Caco-2 (cell line): ENCODE measurements at regions of chr1 and their contacts with region 1.

Region 1: DNA sequence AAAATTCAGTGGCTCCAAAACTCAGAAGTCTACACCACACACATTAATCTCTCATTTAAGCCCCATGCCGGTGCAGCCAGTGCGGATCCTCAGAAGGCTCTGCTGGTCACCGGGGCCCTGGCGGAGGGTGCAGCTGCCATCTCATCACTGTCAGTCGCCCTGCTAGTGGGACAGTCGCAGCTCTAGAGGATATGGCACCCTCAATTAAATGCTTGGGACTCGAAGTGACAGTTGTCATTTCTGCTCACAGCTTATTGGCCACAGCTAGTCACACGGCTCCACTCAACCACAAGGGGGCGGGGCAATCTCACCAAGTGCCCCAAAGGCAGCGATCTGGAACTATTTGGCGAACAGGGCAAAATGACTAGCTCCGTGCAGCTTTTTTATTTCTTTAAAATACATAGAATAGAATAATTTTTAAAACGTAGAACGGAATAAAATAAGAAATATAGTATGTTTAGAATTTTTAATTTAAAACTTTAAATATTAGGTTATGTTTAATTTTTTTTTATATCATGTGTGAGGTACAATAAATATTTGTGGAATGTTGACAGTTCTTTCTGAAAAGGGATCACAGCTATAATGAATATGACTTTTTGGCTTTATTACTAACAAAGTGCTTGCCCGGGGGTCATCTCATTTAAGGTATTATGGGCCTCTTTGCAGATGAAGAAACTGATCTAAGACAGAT is 8.0 kb upstream of the MAN1C1 start:
- DNase-seq: peak; percentile 80 to 84
- H3K4me3 ChIP-seq: no peak overlapping the region; the same call in 1 of the 2 replicates
- H3K4me3 Mint-ChIP-seq: peak overlapping the region; percentile 19
- H3K27ac Mint-ChIP-seq: no peak overlapping the region
- H3K4me1 ChIP-seq: peaks cover 8% of the 10 kb centered on the region; the same call in 1 of the 2 replicates
- H3K4me1 Mint-ChIP-seq: peaks cover 7% of the 10 kb centered on the region
- H3K27me3 ChIP-seq: no peaks in the 10 kb centered on the region
- H3K27me3 Mint-ChIP-seq: peaks cover 3% of the 10 kb centered on the region
- CTCF ChIP-seq: peak; percentile 50 to 58

Region 2: GRCh38 chr1:25247829-25248754 is 360.5 kb before region 1 on chr1:
- CTCF ChIA-PET with region 1: no interaction called
- POLR2A ChIA-PET with region 1: no interaction called
- intact Hi-C with region 1: no loop called
- DNase-seq: no peak
- H3K4me3 ChIP-seq: peak overlapping the region; percentile 86
- H3K4me3 Mint-ChIP-seq: peak overlapping the region; percentile 95
- H3K27ac Mint-ChIP-seq: peak overlapping the region; percentile 92
- H3K4me1 ChIP-seq: peaks cover 12% of the 10 kb centered on the region
- H3K4me1 Mint-ChIP-seq: peaks cover 7% of the 10 kb centered on the region
- H3K27me3 ChIP-seq: no peaks in the 10 kb centered on the region
- H3K27me3 Mint-ChIP-seq: no peaks in the 10 kb centered on the region
- CTCF ChIP-seq: peak in 1 of 2 experiments; percentile 30

Region 3: DNA sequence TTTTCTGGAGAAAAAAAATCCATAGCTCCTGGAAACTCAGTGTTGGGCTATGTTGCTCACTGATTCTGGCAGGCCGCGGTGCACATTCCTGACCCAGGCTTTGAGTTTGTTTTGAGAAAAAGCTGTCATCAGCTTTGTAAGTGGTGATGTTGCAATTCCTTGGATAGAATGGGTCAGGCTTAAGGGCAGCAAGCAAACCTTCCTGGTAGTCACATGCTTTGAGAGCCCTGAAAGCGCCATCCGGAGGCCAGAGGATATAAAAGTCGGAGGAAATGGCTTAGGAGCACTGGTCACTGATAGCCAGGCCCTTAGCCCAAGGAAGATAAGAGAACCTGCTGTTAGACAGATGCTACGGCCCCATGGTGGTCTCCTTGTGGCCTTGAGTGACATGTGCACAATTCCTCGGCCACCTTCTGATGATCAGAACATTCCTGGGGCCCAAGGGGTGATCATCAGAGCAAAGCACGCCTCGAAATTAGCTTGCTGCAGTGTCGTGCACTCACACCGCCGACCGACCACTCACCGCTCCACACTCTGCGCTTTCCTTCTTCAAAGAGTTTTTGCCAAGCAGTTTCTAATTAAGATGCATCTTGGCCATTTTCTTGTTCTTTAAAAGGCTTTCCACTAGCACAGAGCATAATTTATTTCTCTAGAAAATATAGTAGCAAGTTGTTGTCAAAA is 86.6 kb after region 1 on chr1:
- CTCF ChIA-PET with region 1: interaction called, 9 read pairs
- POLR2A ChIA-PET with region 1: interaction called, 4 read pairs
- intact Hi-C with region 1: loop called (anchors 1 kb)
- DNase-seq: peak; percentile 78 to 84
- H3K4me3 ChIP-seq: no peak overlapping the region
- H3K4me3 Mint-ChIP-seq: no peak overlapping the region
- H3K27ac Mint-ChIP-seq: peak overlapping the region; percentile 74
- H3K4me1 ChIP-seq: no peaks in the 10 kb centered on the region
- H3K4me1 Mint-ChIP-seq: peaks cover 7% of the 10 kb centered on the region
- H3K27me3 ChIP-seq: no peaks in the 10 kb centered on the region
- H3K27me3 Mint-ChIP-seq: no peaks in the 10 kb centered on the region
- CTCF ChIP-seq: peak in 1 of 2 experiments; percentile 55

Region 4: GRCh38 chr1:25810341-25811299 is 202.0 kb after region 1 on chr1:
- CTCF ChIA-PET with region 1: interaction called, 12 read pairs
- POLR2A ChIA-PET with region 1: no interaction called
- intact Hi-C with region 1: no loop called
- DNase-seq: peak; percentile 66 to 79
- H3K4me3 ChIP-seq: no peak overlapping the region
- H3K4me3 Mint-ChIP-seq: no peak overlapping the region
- H3K27ac Mint-ChIP-seq: no peak overlapping the region
- H3K4me1 ChIP-seq: no peaks in the 10 kb centered on the region
- H3K4me1 Mint-ChIP-seq: no peaks in the 10 kb centered on the region
- H3K27me3 ChIP-seq: no peaks in the 10 kb centered on the region
- H3K27me3 Mint-ChIP-seq: no peaks in the 10 kb centered on the region
- CTCF ChIP-seq: peak; percentile 80 to 81

Region 5: GRCh38 chr1:25819576-25820246 is 211.1 kb after region 1 on chr1 and contains the start of gene MTFR1L:
- CTCF ChIA-PET with region 1: interaction called, 3 read pairs
- POLR2A ChIA-PET with region 1: interaction called, 10 read pairs
- intact Hi-C with region 1: no loop called
- DNase-seq: peak; percentile 89 to 91
- H3K4me3 ChIP-seq: peak within 1 kb of the TSS; percentile 66
- H3K4me3 Mint-ChIP-seq: peak within 1 kb of the TSS; percentile 77
- H3K27ac Mint-ChIP-seq: peak within 1 kb of the TSS; percentile 97
- H3K4me1 ChIP-seq: peaks cover 15% of the 10 kb centered on the region
- H3K4me1 Mint-ChIP-seq: peaks cover 26% of the 10 kb centered on the region
- H3K27me3 ChIP-seq: no peaks in the 10 kb centered on the region
- H3K27me3 Mint-ChIP-seq: no peaks in the 10 kb centered on the region
- CTCF ChIP-seq: no peak
- total RNA-seq, gene MTFR1L: 23.5 and 26.2 TPM in 2 replicates